Heart left ventricle (tissue), 16 donors: ENCODE measurements at regions of chr20 and their contacts with region 1.

Region 1: GRCh38 chr20:38395165-38395564 is 40.0 kb downstream of the SNHG17 start:
- DNase-seq: no peak
- ATAC-seq: no peak
- H3K4me3 ChIP-seq: no peak overlapping the region
- H3K27ac ChIP-seq: peak overlapping the region in 1 of 12 donors; percentile 28
- H3K4me1 ChIP-seq: peaks cover 0 to 9% (median 0%) of the 10 kb centered on the region in 12 donors
- H3K27me3 ChIP-seq: no peaks in the 10 kb centered on the region
- CTCF ChIP-seq: no peak
- POLR2A ChIP-seq: no peak

Region 2: GRCh38 chr20:38412877-38413577 is 17.9 kb after region 1 on chr20:
- intact Hi-C with region 1: loop called in 1 of 10 experiments (anchors 1 kb)
- DNase-seq: no peak
- ATAC-seq: peak in 1 of 4 donors; percentile 16
- H3K4me3 ChIP-seq: no peak overlapping the region
- H3K27ac ChIP-seq: no peak overlapping the region
- H3K4me1 ChIP-seq: peaks cover 0 to 3% (median 0%) of the 10 kb centered on the region in 12 donors
- H3K27me3 ChIP-seq: no peaks in the 10 kb centered on the region
- CTCF ChIP-seq: no peak
- POLR2A ChIP-seq: no peak

Region 3: DNA sequence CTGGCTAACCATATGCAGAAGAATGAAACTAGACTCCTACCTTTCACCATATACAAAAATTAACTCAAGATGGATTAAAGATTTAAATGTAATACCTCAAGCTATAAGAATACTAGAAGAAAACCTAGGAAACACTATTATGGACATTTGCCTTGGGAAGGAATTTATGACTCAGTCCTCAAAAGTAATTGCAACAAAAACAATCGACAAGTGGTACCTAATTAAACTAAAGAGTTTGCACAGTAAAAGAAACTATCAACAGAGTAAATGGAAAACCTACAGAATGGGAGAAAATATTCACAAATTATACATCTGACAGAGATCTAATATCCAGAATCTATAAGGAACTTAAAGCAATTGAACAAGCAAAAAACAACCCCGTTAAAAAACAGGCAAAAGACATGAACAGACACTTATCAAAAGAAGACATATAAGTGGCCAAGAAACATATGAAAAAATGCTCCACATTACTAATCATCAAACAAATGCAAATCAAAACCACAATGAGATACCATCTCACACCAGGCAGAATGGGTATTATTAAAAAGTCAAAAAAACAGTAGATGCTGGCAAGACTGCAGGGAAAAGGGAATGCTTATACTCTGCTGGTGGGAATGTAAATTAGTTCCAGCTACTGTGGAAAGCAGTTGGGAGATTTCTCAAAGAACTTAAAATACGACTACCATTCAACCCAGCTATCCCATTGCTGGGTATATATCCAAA is 109.4 kb after region 1 on chr20:
- intact Hi-C with region 1: no loop called
- DNase-seq: no peak
- ATAC-seq: no peak
- H3K4me3 ChIP-seq: no peak overlapping the region
- H3K27ac ChIP-seq: no peak overlapping the region
- H3K4me1 ChIP-seq: no peaks in the 10 kb centered on the region
- H3K27me3 ChIP-seq: no peaks in the 10 kb centered on the region
- CTCF ChIP-seq: no peak
- POLR2A ChIP-seq: no peak